WTC11 (cell line): ENCODE measurements at regions of chr11 and their contacts with region 1.

Region 1: GRCh38 chr11:96342961-96343711 is at the start of gene MAML2:
- DNase-seq: peak; percentile 94
- ATAC-seq: peak; percentile 97
- H3K4me3 Mint-ChIP-seq: peak within 1 kb of the TSS; percentile 94
- H3K27ac Mint-ChIP-seq: peak within 1 kb of the TSS; percentile 80; the same call in 1 of the 2 replicates
- H3K4me1 Mint-ChIP-seq: peaks cover 45% of the 10 kb centered on the region
- H3K27me3 Mint-ChIP-seq: no peaks in the 10 kb centered on the region
- CTCF ChIP-seq: peak; percentile 50; the same call in 1 of the 2 replicates
- total RNA-seq, gene MAML2: 5.1 to 8.1 TPM (median 5.2 TPM) in 3 replicates

Region 2: GRCh38 chr11:95835768-95836488 is 507.2 kb before region 1 on chr11:
- CTCF ChIA-PET with region 1: interaction called, 18 read pairs
- POLR2A ChIA-PET with region 1: no interaction called
- DNase-seq: peak; percentile 65
- ATAC-seq: peak; percentile 99
- H3K4me3 Mint-ChIP-seq: no peak overlapping the region
- H3K27ac Mint-ChIP-seq: no peak overlapping the region
- H3K4me1 Mint-ChIP-seq: no peaks in the 10 kb centered on the region
- H3K27me3 Mint-ChIP-seq: no peaks in the 10 kb centered on the region
- CTCF ChIP-seq: peak; percentile 78

Region 3: GRCh38 chr11:96054870-96055705 is 288.0 kb before region 1 on chr11:
- CTCF ChIA-PET with region 1: interaction called, 107 read pairs
- POLR2A ChIA-PET with region 1: interaction called, 6 read pairs
- DNase-seq: no peak
- ATAC-seq: peak; percentile 59
- H3K4me3 Mint-ChIP-seq: no peak overlapping the region
- H3K27ac Mint-ChIP-seq: peak overlapping the region; percentile 78
- H3K4me1 Mint-ChIP-seq: peaks cover 33% of the 10 kb centered on the region
- H3K27me3 Mint-ChIP-seq: no peaks in the 10 kb centered on the region
- CTCF ChIP-seq: 0 out of 2 replicates have a peak, but pooled peaks have one; percentile 17

Region 4: GRCh38 chr11:96155627-96156378 is 187.3 kb before region 1 on chr11:
- CTCF ChIA-PET with region 1: interaction called, 16 read pairs
- POLR2A ChIA-PET with region 1: no interaction called
- DNase-seq: peak; percentile 34
- ATAC-seq: peak; percentile 68
- H3K4me3 Mint-ChIP-seq: no peak overlapping the region
- H3K27ac Mint-ChIP-seq: peak overlapping the region; percentile 66
- H3K4me1 Mint-ChIP-seq: peaks cover 58% of the 10 kb centered on the region
- H3K27me3 Mint-ChIP-seq: no peaks in the 10 kb centered on the region
- CTCF ChIP-seq: no peak

Region 5: DNA sequence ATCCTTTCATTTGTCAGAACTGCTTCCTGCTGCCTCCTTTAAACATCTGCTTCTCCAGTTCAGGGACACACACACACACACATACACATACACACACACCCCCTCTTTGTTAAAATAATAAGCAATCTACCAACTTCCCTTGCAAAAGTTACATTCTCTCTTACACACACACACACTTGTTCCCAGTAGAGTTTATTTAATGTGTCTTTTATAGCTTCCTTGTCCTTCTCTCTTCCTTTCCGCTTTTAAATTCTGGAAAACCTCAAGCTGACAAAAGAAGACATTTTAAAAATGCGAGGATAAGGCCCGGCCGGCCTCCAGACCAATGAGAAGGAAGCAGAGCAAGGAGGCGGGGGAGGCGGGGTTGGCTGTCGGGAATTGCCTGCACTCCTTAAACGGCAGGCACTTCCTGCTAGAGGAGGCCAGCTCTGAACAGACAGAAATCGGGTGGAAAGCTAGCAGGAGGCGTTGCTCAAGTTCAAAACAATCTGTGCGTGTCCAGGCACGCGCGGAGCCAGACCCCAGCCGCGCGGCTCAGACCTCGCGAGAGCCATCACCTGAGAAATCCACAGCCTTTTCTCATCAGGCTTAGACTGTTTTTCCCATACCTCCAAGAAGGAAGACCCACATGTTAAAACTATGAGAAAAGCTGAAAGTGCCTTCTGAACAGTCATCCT is 100.0 kb before region 1 on chr11:
- CTCF ChIA-PET with region 1: interaction called, 47 read pairs
- POLR2A ChIA-PET with region 1: no interaction called
- DNase-seq: peak; percentile 85
- ATAC-seq: peak; percentile 98
- H3K4me3 Mint-ChIP-seq: peak overlapping the region; percentile 64
- H3K27ac Mint-ChIP-seq: peak overlapping the region; percentile 99
- H3K4me1 Mint-ChIP-seq: peaks cover 39% of the 10 kb centered on the region
- H3K27me3 Mint-ChIP-seq: no peaks in the 10 kb centered on the region
- CTCF ChIP-seq: no peak

Region 6: GRCh38 chr11:96299155-96299888 is 43.8 kb before region 1 on chr11:
- CTCF ChIA-PET with region 1: interaction called, 11 read pairs
- POLR2A ChIA-PET with region 1: no interaction called
- DNase-seq: no peak
- ATAC-seq: peak; percentile 47
- H3K4me3 Mint-ChIP-seq: no peak overlapping the region
- H3K27ac Mint-ChIP-seq: no peak overlapping the region
- H3K4me1 Mint-ChIP-seq: peaks cover 34% of the 10 kb centered on the region
- H3K27me3 Mint-ChIP-seq: no peaks in the 10 kb centered on the region
- CTCF ChIP-seq: no peak

Region 7: GRCh38 chr11:96331699-96332116 is 11.4 kb before region 1 on chr11:
- CTCF ChIA-PET with region 1: interaction called, 37 read pairs
- POLR2A ChIA-PET with region 1: interaction called, 5 read pairs
- DNase-seq: no peak
- ATAC-seq: no peak
- H3K4me3 Mint-ChIP-seq: no peak overlapping the region; the same call in 1 of the 2 replicates
- H3K27ac Mint-ChIP-seq: peak overlapping the region; percentile 89
- H3K4me1 Mint-ChIP-seq: peaks cover 76% of the 10 kb centered on the region
- H3K27me3 Mint-ChIP-seq: no peaks in the 10 kb centered on the region
- CTCF ChIP-seq: no peak

Region 8: GRCh38 chr11:96554236-96554820 is 211.2 kb after region 1 on chr11:
- CTCF ChIA-PET with region 1: no interaction called
- POLR2A ChIA-PET with region 1: no interaction called
- DNase-seq: no peak
- ATAC-seq: no peak
- H3K4me3 Mint-ChIP-seq: no peak overlapping the region
- H3K27ac Mint-ChIP-seq: peak overlapping the region; percentile 8
- H3K4me1 Mint-ChIP-seq: no peaks in the 10 kb centered on the region
- H3K27me3 Mint-ChIP-seq: no peaks in the 10 kb centered on the region
- CTCF ChIP-seq: no peak

Region 9: GRCh38 chr11:96595011-96595410 is 251.9 kb after region 1 on chr11:
- CTCF ChIA-PET with region 1: no interaction called
- POLR2A ChIA-PET with region 1: no interaction called
- DNase-seq: no peak
- ATAC-seq: no peak
- H3K4me3 Mint-ChIP-seq: peak overlapping the region; percentile 9; the same call in 1 of the 2 replicates
- H3K27ac Mint-ChIP-seq: no peak overlapping the region
- H3K4me1 Mint-ChIP-seq: peaks cover 65% of the 10 kb centered on the region
- H3K27me3 Mint-ChIP-seq: peaks cover 4% of the 10 kb centered on the region
- CTCF ChIP-seq: no peak